Astrocyte of the cerebellum (primary cell): ENCODE measurements at regions of chr12 and their contacts with region 1.

Region 1: DNA sequence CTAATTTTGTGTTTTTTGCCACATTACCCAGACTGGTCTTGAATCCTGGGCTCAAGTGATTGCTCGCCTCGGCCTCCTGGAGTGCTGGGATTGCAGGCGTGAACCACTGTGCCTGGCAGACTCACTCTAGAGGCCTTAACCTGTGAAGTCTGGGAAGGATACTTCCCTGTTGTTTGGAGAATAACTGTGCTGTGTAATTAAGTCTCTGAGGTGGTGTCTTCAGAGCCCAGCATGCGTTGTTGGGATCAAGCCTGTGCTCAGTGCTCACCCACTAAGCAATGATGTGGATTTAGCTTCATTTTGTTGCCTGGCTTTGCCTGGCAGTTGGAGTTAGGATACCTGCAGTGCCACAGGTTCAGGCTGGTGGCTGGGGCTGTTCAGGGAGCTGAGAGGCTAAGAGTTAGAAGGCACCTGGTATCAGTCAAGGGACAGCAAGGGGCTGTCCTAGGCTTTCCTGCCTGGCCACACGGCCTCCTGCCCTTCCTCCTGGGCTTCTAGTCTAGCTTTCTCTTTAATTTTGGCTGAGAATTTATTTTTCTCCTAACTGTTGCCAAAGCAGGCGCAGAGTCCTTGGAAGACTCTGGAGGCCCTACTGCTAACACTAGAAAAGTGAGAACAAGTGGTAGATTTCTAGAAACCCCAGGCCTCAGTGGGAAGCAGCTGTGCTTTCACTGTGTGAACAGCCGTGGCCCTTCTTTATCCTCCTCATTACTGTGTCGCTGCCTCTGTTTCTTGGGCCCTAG is 38.5 kb downstream of the EP400 start:
- DNase-seq: no peak
- H3K4me3 ChIP-seq: no peak overlapping the region
- CTCF ChIP-seq: no peak

Region 2: DNA sequence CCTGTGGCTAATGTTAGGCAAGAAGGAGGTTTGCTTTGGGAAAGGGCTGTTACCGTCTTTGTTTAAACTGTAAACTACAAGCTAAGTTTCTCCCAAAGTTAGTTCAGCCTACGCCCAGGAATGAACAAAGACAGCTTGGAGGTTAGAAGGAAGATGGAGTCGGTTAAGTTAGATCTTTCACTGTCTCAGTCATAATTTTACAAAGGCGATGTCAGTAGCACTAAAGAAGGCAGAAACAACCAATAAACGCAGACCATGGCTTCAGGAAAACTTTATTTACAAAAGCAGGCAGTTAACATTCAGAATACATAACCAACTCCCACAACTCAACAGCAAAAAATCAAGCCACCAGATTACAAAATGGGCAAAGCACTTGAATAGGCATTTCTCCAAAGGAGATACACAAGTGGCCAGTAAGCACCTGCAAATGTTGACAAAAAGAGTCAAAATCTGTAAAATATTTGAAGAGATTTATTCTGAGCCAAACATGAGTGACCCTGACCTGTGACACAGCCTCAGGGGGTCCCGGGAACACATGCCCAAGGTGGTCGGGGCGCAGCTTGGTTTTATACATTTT is 102.7 kb before region 1 on chr12:
- in situ Hi-C with region 1: loop called (anchors 5 kb)
- DNase-seq: no peak
- H3K4me3 ChIP-seq: no peak overlapping the region
- CTCF ChIP-seq: no peak

Region 3: GRCh38 chr12:132018193-132018916 is 30.1 kb after region 1 on chr12:
- in situ Hi-C with region 1: no loop called
- DNase-seq: no peak
- H3K4me3 ChIP-seq: no peak overlapping the region
- CTCF ChIP-seq: no peak